Activated CD4-positive, alpha-beta T cell treated with anti-CD3 and anti-CD28 coated beads for 36 hours (primary cell): ENCODE measurements at regions of chr21 and their contacts with region 1.

Region 1: DNA sequence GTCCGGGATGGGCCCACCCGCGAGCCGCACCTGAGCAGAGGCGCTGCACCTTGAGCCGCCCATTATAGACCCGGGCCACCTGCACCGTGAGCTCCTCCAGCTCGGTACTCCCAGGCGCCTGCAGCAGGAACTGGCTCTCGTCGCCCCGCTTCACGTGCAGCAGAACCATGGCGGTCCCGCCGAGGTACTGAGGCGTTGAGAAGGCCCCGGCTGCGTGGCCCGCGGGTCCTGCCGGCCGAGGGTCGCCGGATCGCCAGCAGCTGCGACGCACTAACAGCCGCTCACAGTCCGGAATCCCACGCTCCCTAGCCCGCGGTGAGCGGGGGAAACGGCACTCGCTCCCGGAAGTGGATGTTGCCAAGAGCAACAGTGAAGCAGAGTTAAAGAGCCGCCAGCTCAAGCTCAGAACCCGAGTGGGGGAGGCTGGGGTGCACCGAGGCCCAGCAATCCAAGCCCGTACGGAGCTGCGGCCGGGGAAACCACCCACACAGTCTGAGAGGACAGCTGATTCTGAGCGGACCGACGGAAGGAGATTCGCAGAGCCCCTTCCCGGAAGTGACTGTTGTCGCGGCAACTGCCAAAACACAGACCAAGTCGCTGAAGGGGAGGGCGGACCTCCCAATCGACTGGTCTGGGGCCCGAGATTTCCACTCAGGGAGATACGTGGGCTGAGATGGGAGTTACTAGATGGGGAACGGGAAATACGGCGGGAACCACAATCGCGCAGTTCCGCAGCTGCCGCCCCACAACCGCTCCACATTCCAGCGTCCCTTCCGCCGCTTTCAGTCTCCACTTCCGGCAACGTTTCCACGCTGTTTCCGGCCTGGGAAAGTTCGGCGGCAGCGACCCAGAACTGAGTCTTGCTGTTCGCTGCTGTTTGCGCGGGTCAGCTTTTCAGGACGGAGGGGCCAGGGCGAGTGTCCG is at the start of gene CFAP298:
- DNase-seq: peak; percentile 92
- ATAC-seq: peak; percentile 90
- H3K4me3 Mint-ChIP-seq: peak within 1 kb of the TSS; percentile 96
- H3K27ac Mint-ChIP-seq: peak within 1 kb of the TSS; percentile 90
- H3K4me1 Mint-ChIP-seq: peaks cover 9% of the 10 kb centered on the region
- H3K27me3 Mint-ChIP-seq: no peaks in the 10 kb centered on the region
- total RNA-seq, gene CFAP298: 39.5 to 47.9 TPM

Region 2: DNA sequence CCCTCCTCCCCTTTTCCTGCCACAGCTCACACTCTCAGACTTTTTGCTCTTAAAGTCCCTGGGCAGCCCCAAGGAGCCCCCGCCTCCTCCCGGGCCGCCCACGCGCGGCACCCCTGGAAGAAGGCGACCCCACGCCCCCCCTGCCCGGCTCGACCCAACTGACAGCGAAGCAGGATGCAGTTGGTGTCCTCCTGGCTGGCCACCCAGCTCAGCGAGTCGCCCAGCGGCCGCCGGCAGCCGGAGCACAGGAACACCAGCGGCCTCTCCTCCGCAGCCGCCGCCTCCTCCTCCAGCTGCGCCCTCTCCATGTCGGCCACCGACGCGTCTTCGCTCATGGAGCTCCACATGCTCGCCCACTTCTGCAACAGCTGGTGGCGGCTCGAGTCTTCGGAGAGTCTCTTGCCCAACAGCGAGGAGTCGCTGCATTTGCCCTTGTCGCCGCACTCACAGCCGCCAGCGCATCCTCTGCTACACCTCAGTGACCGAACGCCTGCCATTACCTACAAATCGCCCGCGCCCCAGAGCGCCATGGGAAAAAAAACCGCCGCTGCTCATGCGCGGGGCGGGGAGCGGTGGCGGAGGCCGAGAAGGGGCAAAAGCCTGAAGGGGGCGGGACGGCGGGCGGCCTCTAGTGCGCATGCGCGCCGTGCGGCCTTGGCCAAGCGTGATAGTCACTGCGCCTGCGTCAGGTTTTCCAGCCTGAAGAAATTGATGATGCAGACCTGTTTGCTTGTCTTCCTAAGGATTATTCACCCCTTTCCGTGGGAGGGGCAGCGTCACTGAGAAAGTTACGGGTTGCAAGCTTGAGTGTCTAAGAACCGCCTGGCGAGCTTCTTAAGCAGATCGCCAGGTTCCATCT is 333.6 kb before region 1 on chr21 and contains the start of gene MIS18A:
- CTCF ChIA-PET with region 1: no interaction called
- POLR2A ChIA-PET with region 1: no interaction called
- intact Hi-C with region 1: loop called (anchors 1 to 2 kb)
- DNase-seq: peak; percentile 98
- ATAC-seq: peak; percentile 90
- H3K4me3 Mint-ChIP-seq: peak within 1 kb of the TSS; percentile 86
- H3K27ac Mint-ChIP-seq: peak within 1 kb of the TSS; percentile 84
- H3K4me1 Mint-ChIP-seq: peaks cover 17% of the 10 kb centered on the region
- H3K27me3 Mint-ChIP-seq: no peaks in the 10 kb centered on the region
- total RNA-seq, gene MIS18A: 21.5 to 35.3 TPM

Region 3: DNA sequence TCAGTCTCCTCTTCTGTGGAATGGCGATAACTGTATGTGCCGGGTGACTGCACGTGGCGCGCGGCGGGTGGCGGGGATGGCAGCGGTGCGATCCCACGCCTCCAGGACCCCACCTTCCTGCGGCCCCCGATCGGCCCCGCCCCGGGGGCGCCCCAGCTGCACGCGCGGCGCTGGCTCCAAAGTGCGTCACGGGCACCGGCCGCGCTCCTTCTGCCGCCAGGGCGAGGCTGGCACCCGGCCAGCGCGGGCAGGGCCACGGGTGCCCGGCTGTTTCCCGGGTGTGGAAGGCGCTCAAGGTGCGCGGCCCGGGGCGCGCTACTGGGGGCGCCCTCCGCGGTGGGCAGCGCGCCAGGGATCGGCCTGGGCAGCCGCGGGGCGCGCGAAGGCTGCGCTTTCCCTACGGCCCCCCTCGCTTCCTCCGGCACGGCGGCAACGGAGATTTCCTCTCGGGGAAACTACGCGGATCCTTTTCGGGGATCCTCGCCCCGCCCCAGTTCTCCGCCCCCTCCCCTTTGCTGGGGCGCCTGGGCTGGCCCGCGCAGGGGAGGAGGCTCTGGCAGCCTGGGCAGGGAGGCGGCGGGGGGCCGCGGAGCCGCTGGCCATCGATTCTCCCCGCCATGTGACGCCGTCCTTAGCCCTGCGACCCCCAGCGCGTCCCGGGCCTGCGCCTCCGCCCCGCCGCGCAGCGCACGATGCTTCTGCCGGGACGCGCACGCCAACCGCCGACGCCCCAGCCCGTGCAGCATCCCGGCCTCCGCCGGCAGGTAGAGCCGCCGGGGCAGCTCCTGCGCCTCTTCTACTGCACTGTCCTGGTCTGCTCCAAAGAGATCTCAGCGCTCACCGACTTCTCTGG is 199.9 kb before region 1 on chr21 and contains the start of gene EVA1C:
- CTCF ChIA-PET with region 1: no interaction called
- POLR2A ChIA-PET with region 1: no interaction called
- intact Hi-C with region 1: loop called in 1 of 2 experiments (anchors 1 kb)
- DNase-seq: peak; percentile 80
- ATAC-seq: peak; percentile 68
- H3K4me3 Mint-ChIP-seq: peak within 1 kb of the TSS; percentile 94
- H3K27ac Mint-ChIP-seq: peak within 1 kb of the TSS; percentile 97
- H3K4me1 Mint-ChIP-seq: peaks cover 28% of the 10 kb centered on the region
- H3K27me3 Mint-ChIP-seq: no peaks in the 10 kb centered on the region
- total RNA-seq, gene EVA1C: 9.3 to 10.4 TPM

Region 4: GRCh38 chr21:32597205-32597604 is 15.1 kb before region 1 on chr21:
- CTCF ChIA-PET with region 1: interaction called, 27 read pairs
- POLR2A ChIA-PET with region 1: no interaction called
- intact Hi-C with region 1: no loop called
- DNase-seq: peak; percentile 39
- ATAC-seq: peak; percentile 50
- H3K4me3 Mint-ChIP-seq: no peak overlapping the region
- H3K27ac Mint-ChIP-seq: peak overlapping the region; percentile 71
- H3K4me1 Mint-ChIP-seq: peaks cover 12% of the 10 kb centered on the region
- H3K27me3 Mint-ChIP-seq: no peaks in the 10 kb centered on the region

Region 5: GRCh38 chr21:32770871-32771523 is 158.7 kb after region 1 on chr21:
- CTCF ChIA-PET with region 1: no interaction called
- POLR2A ChIA-PET with region 1: interaction called, 3 read pairs
- intact Hi-C with region 1: loop called (anchors 1 to 5 kb)
- DNase-seq: peak; percentile 76
- ATAC-seq: peak; percentile 17
- H3K4me3 Mint-ChIP-seq: peak overlapping the region; percentile 99
- H3K27ac Mint-ChIP-seq: peak overlapping the region; percentile 96
- H3K4me1 Mint-ChIP-seq: peaks cover 54% of the 10 kb centered on the region
- H3K27me3 Mint-ChIP-seq: no peaks in the 10 kb centered on the region

Region 6: GRCh38 chr21:33491373-33492102 is 879.2 kb after region 1 on chr21 and contains the start of gene DNAJC28:
- CTCF ChIA-PET with region 1: no interaction called
- POLR2A ChIA-PET with region 1: no interaction called
- intact Hi-C with region 1: loop called in 1 of 2 experiments (anchors 1 kb)
- DNase-seq: peak; percentile 95
- ATAC-seq: peak; percentile 99
- H3K4me3 Mint-ChIP-seq: peak within 1 kb of the TSS; percentile 87
- H3K27ac Mint-ChIP-seq: peak within 1 kb of the TSS; percentile 91
- H3K4me1 Mint-ChIP-seq: peaks cover 9% of the 10 kb centered on the region
- H3K27me3 Mint-ChIP-seq: no peaks in the 10 kb centered on the region
- total RNA-seq, gene DNAJC28: 0.37 to 0.43 TPM